Activated naive CD4-positive, alpha-beta T cell treated with anti-CD3 and anti-CD28 coated beads for 36 hours (primary cell): ENCODE measurements at regions of chr12 and their contacts with region 1.

Region 1: DNA sequence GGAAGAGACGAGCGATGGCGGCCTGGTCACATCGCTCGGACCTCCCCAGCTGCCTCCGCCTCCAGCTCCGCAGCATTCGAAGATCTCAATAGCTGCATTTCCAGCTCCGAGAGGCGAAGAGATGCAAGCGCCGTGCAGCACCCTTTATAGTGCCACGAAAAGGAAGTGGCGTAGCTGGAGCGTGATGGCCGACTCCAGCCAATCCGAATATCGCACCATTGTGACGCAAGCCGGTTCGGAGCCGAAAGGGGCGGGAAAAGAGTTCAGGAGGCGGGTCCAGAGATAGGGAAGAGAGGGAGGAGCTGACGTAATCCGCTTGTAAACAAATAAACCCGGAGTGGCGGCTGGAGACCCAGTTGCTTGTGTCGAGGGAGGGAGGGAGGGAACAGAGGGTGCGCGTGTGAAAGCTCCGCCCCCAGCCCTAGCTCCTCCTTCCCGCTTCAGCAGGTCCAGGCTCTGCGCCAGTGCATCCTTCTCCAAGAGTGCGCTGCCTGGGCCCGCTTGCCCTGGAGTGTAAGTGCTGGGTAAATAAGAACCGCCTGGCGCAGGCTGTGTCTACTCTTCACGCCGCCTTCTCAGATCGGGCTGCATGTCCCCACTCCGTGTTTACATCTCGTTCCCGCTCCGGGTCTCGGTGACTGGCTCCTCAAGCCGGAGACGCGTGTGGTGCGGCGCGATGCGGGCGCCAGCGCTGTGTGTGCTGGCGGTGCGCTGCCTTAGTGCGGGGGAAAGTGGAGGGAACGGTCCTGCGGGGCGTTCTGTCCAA is at the start of gene BTG1:
- DNase-seq: peak; percentile 100
- H3K4me3 Mint-ChIP-seq: peak within 1 kb of the TSS; percentile 100
- H3K27ac Mint-ChIP-seq: peak within 1 kb of the TSS; percentile 100
- H3K4me1 Mint-ChIP-seq: peaks cover 27% of the 10 kb centered on the region
- H3K27me3 Mint-ChIP-seq: no peaks in the 10 kb centered on the region
- total RNA-seq, gene BTG1: 218 to 223 TPM

Region 2: DNA sequence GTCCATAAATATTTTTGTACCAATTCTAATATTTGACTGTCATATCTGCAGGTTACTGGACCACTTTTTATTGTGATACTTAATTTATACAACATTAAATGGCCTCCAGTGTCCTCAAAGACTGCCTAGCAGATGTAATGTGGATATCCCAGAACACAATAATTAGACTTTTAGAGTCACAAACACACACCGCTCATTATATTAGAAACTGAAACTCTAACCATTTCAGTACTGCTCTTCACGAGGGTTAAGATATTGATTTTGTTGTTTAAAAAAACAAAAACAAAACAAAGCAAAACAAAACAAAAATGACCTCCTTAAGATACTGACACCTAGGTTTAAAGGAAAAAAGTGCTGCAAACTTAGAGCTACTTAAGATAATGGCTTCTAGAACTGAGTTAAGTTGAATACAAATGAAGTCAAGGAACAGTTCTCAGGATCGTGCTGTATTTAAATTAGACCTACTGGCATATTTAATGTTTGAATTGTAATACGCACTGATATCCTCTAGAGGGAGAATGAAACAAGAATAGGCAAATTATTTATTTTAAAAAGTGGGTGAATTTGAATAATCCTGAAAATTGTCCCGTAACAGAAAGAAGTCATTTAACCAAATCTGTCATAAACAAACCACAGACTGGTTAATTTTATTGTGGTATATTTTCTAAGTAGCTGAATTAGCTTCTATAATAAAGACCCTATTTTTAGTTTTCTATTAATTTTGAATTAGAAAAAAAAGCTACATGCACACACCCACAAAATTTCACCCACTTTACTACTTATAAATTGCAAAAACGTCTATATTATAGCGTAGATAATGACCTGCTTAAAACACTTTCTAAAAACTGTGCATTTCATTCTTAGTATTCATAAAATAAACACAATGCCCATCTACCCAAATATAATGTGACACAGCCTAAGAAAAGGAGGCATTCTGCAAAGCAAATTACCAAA is 568.1 kb before region 1 on chr12:
- CTCF ChIA-PET with region 1: no interaction called
- intact Hi-C with region 1: loop called (anchors 2 kb)
- DNase-seq: no peak
- H3K4me3 Mint-ChIP-seq: peak overlapping the region; percentile 71
- H3K27ac Mint-ChIP-seq: peak overlapping the region; percentile 61
- H3K4me1 Mint-ChIP-seq: peaks cover 19% of the 10 kb centered on the region
- H3K27me3 Mint-ChIP-seq: no peaks in the 10 kb centered on the region

Region 3: GRCh38 chr12:91877022-91877421 is 268.9 kb before region 1 on chr12:
- CTCF ChIA-PET with region 1: no interaction called
- intact Hi-C with region 1: loop called (anchors 1 kb)
- DNase-seq: peak; percentile 94
- H3K4me3 Mint-ChIP-seq: peak overlapping the region; percentile 67
- H3K27ac Mint-ChIP-seq: peak overlapping the region; percentile 94
- H3K4me1 Mint-ChIP-seq: peaks cover 67% of the 10 kb centered on the region
- H3K27me3 Mint-ChIP-seq: no peaks in the 10 kb centered on the region

Region 4: GRCh38 chr12:92158796-92159439 is 13.0 kb after region 1 on chr12:
- CTCF ChIA-PET with region 1: interaction called, 4 read pairs
- intact Hi-C with region 1: loop called (anchors 1 kb)
- DNase-seq: no peak
- H3K4me3 Mint-ChIP-seq: peak overlapping the region; percentile 55
- H3K27ac Mint-ChIP-seq: peak overlapping the region; percentile 89
- H3K4me1 Mint-ChIP-seq: peaks cover 72% of the 10 kb centered on the region
- H3K27me3 Mint-ChIP-seq: no peaks in the 10 kb centered on the region

Region 5: GRCh38 chr12:92199819-92200576 is 54.1 kb after region 1 on chr12:
- CTCF ChIA-PET with region 1: no interaction called
- intact Hi-C with region 1: no loop called
- DNase-seq: no peak
- H3K4me3 Mint-ChIP-seq: no peak overlapping the region
- H3K27ac Mint-ChIP-seq: no peak overlapping the region
- H3K4me1 Mint-ChIP-seq: peaks cover 5% of the 10 kb centered on the region
- H3K27me3 Mint-ChIP-seq: no peaks in the 10 kb centered on the region

Region 6: GRCh38 chr12:92297932-92298696 is 152.2 kb after region 1 on chr12:
- CTCF ChIA-PET with region 1: interaction called, 3 read pairs
- intact Hi-C with region 1: loop called (anchors 1 kb)
- DNase-seq: peak; percentile 39
- H3K4me3 Mint-ChIP-seq: no peak overlapping the region
- H3K27ac Mint-ChIP-seq: peak overlapping the region; percentile 80
- H3K4me1 Mint-ChIP-seq: peaks cover 14% of the 10 kb centered on the region
- H3K27me3 Mint-ChIP-seq: no peaks in the 10 kb centered on the region

Region 7: GRCh38 chr12:92593734-92594402 is 448.0 kb after region 1 on chr12:
- CTCF ChIA-PET with region 1: no interaction called
- intact Hi-C with region 1: loop called (anchors 2 kb)
- DNase-seq: peak; percentile 87
- H3K4me3 Mint-ChIP-seq: peak overlapping the region; percentile 55
- H3K27ac Mint-ChIP-seq: peak overlapping the region; percentile 96
- H3K4me1 Mint-ChIP-seq: peaks cover 78% of the 10 kb centered on the region
- H3K27me3 Mint-ChIP-seq: no peaks in the 10 kb centered on the region